Sciatic nerve (tissue), 2 donors: ENCODE measurements at regions of chr20 and their contacts with region 1.

Region 1: DNA sequence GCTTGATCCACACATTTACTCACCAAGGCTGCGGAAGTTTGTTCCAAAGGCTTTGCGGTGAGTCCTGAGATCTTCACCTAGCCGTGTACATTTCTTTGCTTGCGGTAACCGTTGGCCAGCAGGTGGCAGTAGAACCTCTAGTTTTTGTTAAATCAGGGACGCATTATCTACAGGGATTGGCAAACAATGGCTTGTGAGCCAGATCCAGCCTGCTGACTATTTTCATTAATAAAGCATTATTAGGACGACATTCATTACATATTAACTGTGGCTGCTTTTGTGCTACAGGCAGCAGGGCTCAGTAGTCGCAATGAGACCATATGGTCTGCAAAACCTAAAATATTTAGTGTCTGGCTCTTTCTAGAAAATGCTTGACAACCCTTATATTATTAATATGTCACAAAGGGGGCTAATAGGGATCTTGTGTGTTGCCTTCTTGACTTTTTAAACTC is 174.1 kb downstream of the DOK5 start:
- DNase-seq: peak; percentile 92
- ATAC-seq: peak; percentile 82

Region 2: DNA sequence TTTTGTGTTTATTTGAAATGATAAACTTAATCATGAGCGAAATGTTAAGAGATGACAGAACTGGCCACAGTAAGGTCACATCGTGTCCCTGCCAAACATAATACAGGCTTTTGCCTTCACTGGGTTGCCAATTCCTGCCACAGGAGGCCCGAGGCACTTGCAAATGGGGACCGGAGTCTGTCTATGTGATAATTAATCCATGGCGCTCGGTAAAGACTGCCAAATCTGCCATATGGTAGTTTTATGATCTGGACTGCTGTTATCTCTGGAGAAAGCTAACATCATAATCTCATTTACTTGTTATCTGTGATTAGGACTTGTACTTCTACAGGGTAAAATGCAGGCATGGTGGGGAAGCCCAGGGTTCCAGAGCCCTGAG is 1847.9 kb before region 1 on chr20:
- intact Hi-C with region 1: no loop called
- DNase-seq: no peak
- ATAC-seq: no peak

Region 3: GRCh38 chr20:54093423-54094267 is 555.9 kb before region 1 on chr20:
- intact Hi-C with region 1: loop called (anchors 10 kb)
- DNase-seq: no peak
- ATAC-seq: peak; percentile 73

Region 4: DNA sequence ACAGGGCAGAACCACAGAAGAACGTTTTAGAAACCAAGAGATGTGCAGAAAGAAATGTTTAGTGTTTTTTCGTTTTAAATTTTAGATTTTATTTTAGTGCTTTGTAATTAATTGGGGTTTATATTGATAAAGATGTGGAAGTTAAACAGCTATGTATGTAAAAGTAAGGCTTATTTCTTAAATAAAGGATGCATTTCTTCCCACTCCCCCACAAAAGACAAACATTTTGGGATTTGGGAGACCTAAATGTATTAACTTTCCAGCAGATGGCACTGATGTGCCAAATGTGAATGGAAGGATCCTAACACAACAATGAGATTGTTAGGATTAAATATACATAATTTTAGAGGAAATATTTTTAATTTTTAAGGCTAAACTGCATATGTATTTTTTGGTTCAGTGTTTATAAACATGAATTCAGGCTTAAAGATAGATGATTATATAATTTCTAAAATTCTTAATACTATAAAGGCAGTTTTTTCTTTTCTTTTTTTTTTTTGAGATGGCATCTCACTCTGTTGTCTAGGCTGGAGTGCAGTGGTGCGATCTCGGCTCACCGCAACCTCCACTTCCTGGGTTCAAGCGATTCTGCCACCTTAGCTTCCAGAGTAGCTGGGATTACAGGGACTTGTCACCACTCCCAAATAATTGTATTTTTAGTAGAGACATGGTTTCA is 429.6 kb before region 1 on chr20:
- intact Hi-C with region 1: loop called (anchors 5 kb)
- DNase-seq: no peak
- ATAC-seq: no peak

Region 5: GRCh38 chr20:54834255-54834654 is 184.7 kb after region 1 on chr20:
- intact Hi-C with region 1: no loop called
- DNase-seq: no peak
- ATAC-seq: no peak

Region 6: DNA sequence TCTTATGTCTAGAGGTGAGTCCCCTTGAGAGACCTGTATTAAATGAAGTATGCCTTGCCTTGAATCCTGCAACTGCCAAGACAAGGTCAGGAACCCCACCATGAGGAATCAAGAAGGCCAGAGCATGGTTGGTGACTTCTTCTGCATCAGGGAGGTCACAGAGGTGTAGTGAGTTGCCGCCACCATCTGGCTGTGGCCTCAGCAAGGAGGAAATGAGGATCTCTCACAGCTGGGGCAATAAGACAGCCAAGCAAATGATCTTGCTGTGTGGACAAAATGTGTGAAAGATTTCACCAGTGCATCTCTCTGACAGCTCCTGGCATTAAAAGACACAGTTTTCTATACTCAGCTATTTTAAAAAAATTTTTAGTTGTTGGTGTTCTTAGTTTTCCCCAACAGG is 436.9 kb after region 1 on chr20:
- intact Hi-C with region 1: no loop called
- DNase-seq: no peak
- ATAC-seq: no peak

Region 7: GRCh38 chr20:55333798-55334197 is 684.3 kb after region 1 on chr20:
- intact Hi-C with region 1: no loop called
- DNase-seq: no peak
- ATAC-seq: no peak